H1 (cell line): ENCODE measurements at regions of chr16 and their contacts with region 1.

Region 1: GRCh38 chr16:89737341-89738071 is 16.2 kb downstream of the ZNF276 start:
- DNase-seq: no peak
- H3K4me3 ChIP-seq: no peak overlapping the region
- H3K27ac ChIP-seq: no peak overlapping the region; the same call in 1 of the 2 replicates
- H3K4me1 ChIP-seq: no peaks in the 10 kb centered on the region
- H3K27me3 ChIP-seq: no peaks in the 10 kb centered on the region
- CTCF ChIP-seq: no peak
- EP300 ChIP-seq: no peak
- POLR2A ChIP-seq: no peak
- RAD21 ChIP-seq: no peak

Region 2: DNA sequence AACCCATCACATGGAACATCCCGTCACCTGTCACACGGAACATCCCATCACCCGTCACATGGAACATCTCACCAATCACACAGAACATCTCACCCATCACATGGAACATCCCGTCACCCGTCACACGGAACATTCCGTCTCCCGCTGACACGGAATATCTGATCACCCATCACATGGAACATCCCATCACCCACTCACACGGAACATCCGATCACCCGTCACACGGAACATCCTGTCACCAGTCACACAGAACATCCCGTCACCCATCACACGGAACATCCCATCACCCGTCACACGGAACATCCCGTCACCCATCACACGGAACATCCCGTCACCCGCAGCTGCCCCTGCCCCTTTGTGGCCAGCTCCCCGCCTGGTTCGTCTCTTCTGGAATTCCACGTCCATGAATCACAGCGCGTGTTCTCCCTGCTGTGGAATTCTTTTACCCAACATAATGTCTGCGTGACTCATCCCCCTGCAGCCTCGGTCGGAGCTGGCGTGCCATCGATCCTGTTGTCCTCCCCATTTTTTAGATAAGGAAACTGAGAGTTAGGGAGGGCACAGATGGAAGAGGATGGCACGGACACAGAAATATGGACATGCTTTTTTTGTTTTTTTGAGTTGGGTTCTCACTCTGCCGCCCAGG is 156.3 kb before region 1 on chr16:
- CTCF ChIA-PET with region 1: no interaction called
- POLR2A ChIA-PET with region 1: no interaction called
- DNase-seq: no peak
- H3K4me3 ChIP-seq: no peak overlapping the region
- H3K27ac ChIP-seq: no peak overlapping the region
- H3K4me1 ChIP-seq: peaks cover 0 to 2% (median 0%) of the 10 kb centered on the region in 4 experiments; a peak in 1 of 7 replicates
- H3K27me3 ChIP-seq: peaks cover 3 to 13% (median 8%) of the 10 kb centered on the region in 4 experiments; a peak in 6 of 7 replicates
- CTCF ChIP-seq: no peak
- EP300 ChIP-seq: no peak
- POLR2A ChIP-seq: no peak
- RAD21 ChIP-seq: no peak

Region 3: GRCh38 chr16:89720813-89721545 is 16.5 kb before region 1 on chr16 and contains the starts of genes VPS9D1 and ZNF276:
- CTCF ChIA-PET with region 1: interaction called, 3 read pairs
- POLR2A ChIA-PET with region 1: interaction called, 193 read pairs
- DNase-seq: peak in 1 of 2 experiments; percentile 89
- H3K4me3 ChIP-seq: peak within 1 kb of the TSS; percentile 64 to 87 (median 68)
- H3K27ac ChIP-seq: peak within 1 kb of the TSS; percentile 52; the same call in 1 of the 2 replicates
- H3K4me1 ChIP-seq: peaks cover 0 to 13% (median 10%) of the 10 kb centered on the region in 4 experiments; a peak in 5 of 7 replicates
- H3K27me3 ChIP-seq: peaks cover 8 to 58% (median 46%) of the 10 kb centered on the region in 4 experiments
- CTCF ChIP-seq: no peak
- EP300 ChIP-seq: no peak
- POLR2A ChIP-seq: peak in 1 of 2 experiments; percentile 67; a peak in 2 of 3 replicates
- RAD21 ChIP-seq: no peak
- total RNA-seq, gene VPS9D1: 5.4 and 5.8 TPM in 2 replicates
- total RNA-seq, gene ZNF276: 9.3 and 9.6 TPM in 2 replicates

Region 4: GRCh38 chr16:89749647-89750046 is 12.1 kb after region 1 on chr16:
- CTCF ChIA-PET with region 1: interaction called, 9 read pairs
- POLR2A ChIA-PET with region 1: interaction called, 16 read pairs
- DNase-seq: no peak
- H3K4me3 ChIP-seq: no peak overlapping the region
- H3K27ac ChIP-seq: no peak overlapping the region
- H3K4me1 ChIP-seq: no peaks in the 10 kb centered on the region
- H3K27me3 ChIP-seq: no peaks in the 10 kb centered on the region
- CTCF ChIP-seq: no peak
- EP300 ChIP-seq: no peak
- POLR2A ChIP-seq: no peak
- RAD21 ChIP-seq: no peak

Region 5: GRCh38 chr16:89761304-89761922 is 23.9 kb after region 1 on chr16:
- CTCF ChIA-PET with region 1: interaction called, 5 read pairs
- POLR2A ChIA-PET with region 1: interaction called, 10 read pairs
- DNase-seq: no peak
- H3K4me3 ChIP-seq: no peak overlapping the region
- H3K27ac ChIP-seq: no peak overlapping the region
- H3K4me1 ChIP-seq: no peaks in the 10 kb centered on the region
- H3K27me3 ChIP-seq: no peaks in the 10 kb centered on the region
- CTCF ChIP-seq: no peak
- EP300 ChIP-seq: no peak
- POLR2A ChIP-seq: no peak
- RAD21 ChIP-seq: no peak